Activated B cell treated with CpG ODN at 0.5 μM for 24 hours (primary cell): ENCODE measurements at regions of chr19 and their contacts with region 1.

Region 1: DNA sequence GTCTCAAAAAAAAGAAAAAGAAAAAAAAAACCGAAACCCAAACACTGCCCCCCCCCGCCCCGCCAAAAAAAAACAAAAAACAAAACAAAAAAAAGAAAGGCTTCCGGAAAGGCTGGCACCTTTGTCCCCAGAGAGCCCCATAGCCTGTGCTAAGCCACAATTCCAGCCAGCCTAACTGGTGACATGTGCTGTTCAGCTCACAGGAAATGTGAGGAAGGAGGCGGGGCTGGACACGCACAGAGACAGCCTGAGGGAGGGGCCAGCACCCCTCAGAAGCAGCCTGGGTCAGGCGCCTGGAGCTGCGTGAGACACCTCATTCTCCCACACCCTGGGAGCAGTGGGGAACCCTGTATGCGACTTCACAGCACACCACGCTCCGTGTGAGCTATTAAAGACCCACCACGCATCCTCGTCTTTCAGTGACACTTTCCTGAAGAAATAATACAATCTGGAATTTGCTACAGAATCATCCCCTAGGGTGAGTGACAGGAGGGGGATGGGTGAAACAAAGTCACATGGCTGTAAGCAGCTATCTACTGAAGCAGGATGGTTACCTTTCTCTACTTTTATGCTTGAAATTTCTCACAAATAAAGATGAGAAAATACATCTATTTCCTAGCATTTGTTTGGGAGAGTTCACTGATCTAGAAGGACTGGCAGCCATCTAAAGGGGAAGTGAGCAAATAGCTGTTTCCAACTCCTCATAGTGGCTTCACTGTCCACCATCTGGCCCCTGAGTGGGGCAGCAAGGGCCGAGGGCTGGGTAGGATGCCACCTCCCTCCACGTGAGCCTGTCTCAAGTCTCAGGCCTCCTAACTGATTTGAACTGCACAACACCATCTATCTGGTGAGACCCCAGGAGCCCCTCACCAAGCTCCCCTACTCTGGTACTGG is 12.3 kb upstream of the SLC35E1 start:
- DNase-seq: peak; percentile 78
- ATAC-seq: peak; percentile 46
- H3K4me3 Mint-ChIP-seq: peak overlapping the region; percentile 94
- H3K27ac Mint-ChIP-seq: peak overlapping the region; percentile 99
- H3K4me1 Mint-ChIP-seq: peaks cover 92% of the 10 kb centered on the region
- H3K27me3 Mint-ChIP-seq: no peaks in the 10 kb centered on the region
- CTCF ChIP-seq: no peak

Region 2: DNA sequence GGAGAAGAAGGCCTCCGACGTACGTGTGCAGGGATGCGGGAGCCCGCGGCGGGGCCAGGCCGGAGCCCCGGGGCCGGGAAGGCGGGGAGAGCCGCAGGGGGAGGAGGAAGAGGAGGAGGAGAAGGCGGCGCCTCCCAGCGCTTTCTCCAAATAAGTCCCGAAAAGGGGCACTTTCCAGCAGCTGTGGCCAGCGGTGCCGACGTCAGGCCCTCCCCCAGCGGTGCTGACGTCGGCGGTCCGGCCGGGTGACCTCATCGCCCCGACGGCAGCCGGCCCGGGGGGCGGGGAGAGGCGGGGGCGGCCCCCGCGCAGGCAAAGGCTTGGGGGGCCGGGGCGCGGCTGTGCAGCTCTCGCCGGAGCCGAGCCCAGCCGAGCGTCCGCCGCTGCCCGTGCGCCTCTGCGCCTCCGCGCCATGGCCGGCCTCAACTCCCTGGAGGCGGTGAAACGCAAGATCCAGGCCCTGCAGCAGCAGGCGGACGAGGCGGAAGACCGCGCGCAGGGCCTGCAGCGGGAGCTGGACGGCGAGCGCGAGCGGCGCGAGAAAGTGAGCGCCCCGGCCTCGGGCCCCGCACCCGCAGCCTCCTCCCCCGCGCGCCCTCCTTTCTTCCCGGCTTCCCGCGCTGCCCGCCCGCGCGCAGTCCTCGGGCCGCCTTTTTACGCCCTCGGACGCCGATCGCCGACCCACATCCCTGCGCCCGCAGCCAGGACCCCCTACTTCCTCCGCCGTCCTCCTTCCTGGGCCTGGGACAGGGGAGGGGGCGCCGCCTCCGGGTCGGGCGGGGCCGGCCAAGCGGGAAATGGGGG is 508.1 kb before region 1 on chr19 and contains the start of gene TPM4:
- CTCF ChIA-PET with region 1: no interaction called
- POLR2A ChIA-PET with region 1: interaction called, 12 read pairs
- intact Hi-C with region 1: loop called (anchors 5 kb)
- DNase-seq: peak; percentile 77
- ATAC-seq: peak; percentile 53
- H3K4me3 Mint-ChIP-seq: peak within 1 kb of the TSS; percentile 90
- H3K27ac Mint-ChIP-seq: peak within 1 kb of the TSS; percentile 98
- H3K4me1 Mint-ChIP-seq: peaks cover 57% of the 10 kb centered on the region
- H3K27me3 Mint-ChIP-seq: no peaks in the 10 kb centered on the region
- CTCF ChIP-seq: no peak
- total RNA-seq, gene TPM4: 238 and 257 TPM in 2 replicates

Region 3: DNA sequence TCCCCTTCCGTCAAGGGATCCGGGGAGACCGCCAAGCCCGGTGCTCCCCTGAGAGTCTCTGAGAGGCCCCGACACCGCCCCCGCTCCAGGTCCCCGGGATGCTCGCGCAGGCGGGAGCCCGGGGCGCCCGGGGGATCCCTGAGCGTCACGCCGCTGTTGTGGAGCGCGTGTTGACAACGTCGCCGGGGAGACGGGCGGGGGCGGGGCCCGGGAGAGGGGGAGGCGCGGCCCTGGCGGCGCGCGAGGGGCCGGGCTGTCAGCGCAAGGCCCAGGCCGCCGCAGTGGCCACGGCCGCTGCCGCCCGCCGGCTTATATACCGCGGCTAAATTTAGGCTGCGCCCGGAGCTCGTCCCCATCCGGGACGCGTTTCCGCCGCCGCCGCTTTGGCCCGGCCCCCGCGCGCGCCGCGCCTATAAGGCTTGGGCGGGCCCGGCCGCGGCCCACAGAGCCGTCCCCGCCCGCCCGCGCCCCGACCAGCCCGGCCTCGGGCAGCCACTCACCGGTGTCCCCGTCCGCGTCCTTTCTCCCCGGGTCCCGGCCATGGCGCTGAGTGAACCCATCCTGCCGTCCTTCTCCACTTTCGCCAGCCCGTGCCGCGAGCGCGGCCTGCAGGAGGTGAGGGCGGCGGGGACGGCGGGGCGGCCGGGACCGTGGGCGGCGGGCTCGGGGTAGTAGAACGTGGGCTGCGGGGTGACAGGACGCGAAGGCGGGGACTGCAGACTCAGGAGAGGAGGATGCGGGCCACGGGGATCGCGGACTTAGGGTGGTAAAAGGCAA is 259.9 kb before region 1 on chr19 and contains the start of gene KLF2:
- CTCF ChIA-PET with region 1: no interaction called
- POLR2A ChIA-PET with region 1: interaction called, 7 read pairs
- intact Hi-C with region 1: loop called (anchors 5 kb)
- DNase-seq: peak; percentile 92
- ATAC-seq: peak; percentile 63
- H3K4me3 Mint-ChIP-seq: peak within 1 kb of the TSS; percentile 77
- H3K27ac Mint-ChIP-seq: peak within 1 kb of the TSS; percentile 81
- H3K4me1 Mint-ChIP-seq: peaks cover 77% of the 10 kb centered on the region
- H3K27me3 Mint-ChIP-seq: no peaks in the 10 kb centered on the region
- CTCF ChIP-seq: no peak
- total RNA-seq, gene KLF2: 76.8 and 87.6 TPM in 2 replicates

Region 4: DNA sequence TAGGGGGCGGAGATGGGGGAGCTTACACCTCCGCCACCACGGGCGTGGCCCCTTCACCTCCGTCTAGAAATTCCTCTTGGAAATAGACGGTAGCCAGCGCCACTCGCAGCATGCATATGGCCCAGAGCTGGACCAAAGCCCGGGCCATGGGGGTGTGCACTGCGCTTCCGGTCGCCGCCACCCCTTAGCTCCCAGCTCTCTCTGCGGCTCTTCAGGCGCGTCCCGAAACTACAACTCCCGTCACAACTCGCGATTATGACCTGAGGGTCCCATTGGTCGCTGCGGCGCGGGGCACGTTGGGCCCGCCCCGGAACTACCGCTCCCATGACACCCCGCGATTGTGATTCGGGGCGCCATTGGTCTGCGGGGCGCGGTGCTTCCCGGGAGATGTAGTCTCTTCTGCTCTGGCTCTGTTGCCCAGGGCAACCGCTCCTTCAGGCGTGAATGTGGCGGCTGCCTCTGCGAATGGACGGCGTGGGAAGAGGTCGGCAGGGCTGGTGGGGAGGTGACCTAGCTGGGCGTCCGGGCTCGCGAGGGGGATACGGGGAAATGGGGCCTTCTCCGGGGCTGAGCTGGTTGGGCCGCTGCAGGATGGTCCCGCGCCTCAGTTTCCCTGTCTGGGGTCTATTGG is 88.4 kb before region 1 on chr19 and contains the starts of genes C19orf44 and CALR3:
- CTCF ChIA-PET with region 1: no interaction called
- POLR2A ChIA-PET with region 1: interaction called, 10 read pairs
- intact Hi-C with region 1: loop called (anchors 1 kb)
- DNase-seq: peak; percentile 94
- ATAC-seq: peak; percentile 97
- H3K4me3 Mint-ChIP-seq: peak within 1 kb of the TSS; percentile 98
- H3K27ac Mint-ChIP-seq: peak within 1 kb of the TSS; percentile 88
- H3K4me1 Mint-ChIP-seq: peaks cover 19% of the 10 kb centered on the region
- H3K27me3 Mint-ChIP-seq: no peaks in the 10 kb centered on the region
- CTCF ChIP-seq: no peak
- total RNA-seq, gene C19orf44: 5.9 and 7.1 TPM in 2 replicates
- total RNA-seq, gene CALR3: not detected in 2 replicates

Region 5: DNA sequence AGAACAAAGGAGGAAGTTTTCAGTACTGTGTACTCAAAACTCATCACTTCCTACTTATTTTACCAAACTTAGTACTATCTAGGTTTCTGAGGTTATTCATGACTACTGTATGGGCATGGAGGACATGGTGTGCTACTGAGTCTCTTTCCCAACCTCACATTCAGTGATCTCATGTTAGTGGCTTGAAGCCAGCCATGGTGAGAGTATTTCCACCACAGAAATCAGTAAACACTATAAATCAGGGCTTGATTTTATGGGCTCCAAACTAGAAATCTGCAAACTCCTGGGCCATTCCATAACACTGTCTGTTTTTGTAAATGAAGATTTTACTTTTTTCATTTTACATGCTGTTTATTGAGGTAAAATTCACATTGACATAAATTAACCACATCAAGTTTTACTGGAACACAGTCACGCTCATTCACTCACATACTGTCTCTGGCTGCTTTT is 23.8 kb after region 1 on chr19:
- CTCF ChIA-PET with region 1: interaction called, 4 read pairs
- POLR2A ChIA-PET with region 1: interaction called, 35 read pairs
- intact Hi-C with region 1: loop called (anchors 2 kb)
- DNase-seq: no peak
- ATAC-seq: no peak
- H3K4me3 Mint-ChIP-seq: no peak overlapping the region
- H3K27ac Mint-ChIP-seq: peak overlapping the region; percentile 64
- H3K4me1 Mint-ChIP-seq: peaks cover 83% of the 10 kb centered on the region
- H3K27me3 Mint-ChIP-seq: no peaks in the 10 kb centered on the region
- CTCF ChIP-seq: no peak

Region 6: DNA sequence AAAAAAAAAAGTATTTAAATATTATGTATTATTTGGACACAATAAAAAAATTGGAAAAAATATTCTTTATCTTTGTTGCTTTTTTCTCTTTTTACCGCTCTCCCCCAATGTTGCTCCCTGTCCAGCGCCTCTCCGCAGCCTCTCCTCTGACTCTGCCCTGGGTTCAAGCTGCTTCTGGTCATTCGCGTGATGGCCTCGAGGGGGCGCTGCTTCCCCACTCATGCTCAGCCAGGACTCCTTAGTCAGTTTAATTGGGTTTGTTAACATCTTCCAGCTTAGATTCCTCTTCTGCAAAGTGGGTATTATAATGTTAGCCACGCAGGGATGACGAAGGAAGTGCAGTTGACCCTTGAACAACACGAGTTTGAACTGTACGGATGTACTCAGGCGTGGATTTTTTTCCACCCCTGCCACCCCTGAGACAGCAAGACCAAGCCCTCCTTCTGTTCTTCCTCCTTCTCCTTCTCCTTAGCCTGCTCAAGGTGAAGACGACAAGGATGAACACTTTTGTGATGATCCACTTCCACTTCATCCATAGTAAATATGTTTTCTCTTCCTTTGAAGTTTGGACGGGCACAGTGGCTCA is 130.3 kb after region 1 on chr19:
- CTCF ChIA-PET with region 1: no interaction called
- POLR2A ChIA-PET with region 1: interaction called, 16 read pairs
- intact Hi-C with region 1: loop called (anchors 2 kb)
- DNase-seq: peak; percentile 47
- ATAC-seq: peak; percentile 20
- H3K4me3 Mint-ChIP-seq: peak overlapping the region; percentile 42
- H3K27ac Mint-ChIP-seq: peak overlapping the region; percentile 81
- H3K4me1 Mint-ChIP-seq: peaks cover 54% of the 10 kb centered on the region
- H3K27me3 Mint-ChIP-seq: no peaks in the 10 kb centered on the region
- CTCF ChIP-seq: peak; percentile 94

Region 7: GRCh38 chr19:18557474-18558201 is 1973.1 kb after region 1 on chr19 and contains the start of gene KXD1:
- CTCF ChIA-PET with region 1: no interaction called
- POLR2A ChIA-PET with region 1: interaction called, 10 read pairs
- intact Hi-C with region 1: no loop called
- DNase-seq: peak; percentile 93
- ATAC-seq: peak; percentile 99
- H3K4me3 Mint-ChIP-seq: peak within 1 kb of the TSS; percentile 87
- H3K27ac Mint-ChIP-seq: peak within 1 kb of the TSS; percentile 89
- H3K4me1 Mint-ChIP-seq: peaks cover 25% of the 10 kb centered on the region
- H3K27me3 Mint-ChIP-seq: no peaks in the 10 kb centered on the region
- CTCF ChIP-seq: no peak
- total RNA-seq, gene KXD1: 82.2 and 88.8 TPM in 2 replicates